Psoas muscle (tissue), 8 donors: ENCODE measurements at regions of chr1 and their contacts with region 1.

Region 1: GRCh38 chr1:41109316-41110197 is 88.0 kb upstream of the SLFNL1 start:
- DNase-seq: peak in 1 of 2 donors; percentile 18
- ATAC-seq: peak; percentile 64 to 93 (median 84)
- H3K4me3 ChIP-seq: no peak overlapping the region
- H3K27ac ChIP-seq: peak overlapping the region; percentile 68
- H3K4me1 ChIP-seq: peaks cover 27% of the 10 kb centered on the region
- H3K27me3 ChIP-seq: no peaks in the 10 kb centered on the region
- CTCF ChIP-seq: no peak

Region 2: GRCh38 chr1:41045740-41046139 is 63.8 kb before region 1 on chr1:
- intact Hi-C with region 1: loop called in 1 of 2 experiments (anchors 10 kb)
- DNase-seq: peak; percentile 42 to 73
- ATAC-seq: peak; percentile 89 to 96 (median 90)
- H3K4me3 ChIP-seq: peak overlapping the region; percentile 46
- H3K27ac ChIP-seq: peak overlapping the region; percentile 83
- H3K4me1 ChIP-seq: peaks cover 26% of the 10 kb centered on the region
- H3K27me3 ChIP-seq: no peaks in the 10 kb centered on the region
- CTCF ChIP-seq: no peak

Region 3: GRCh38 chr1:41239988-41240610 is 130.5 kb after region 1 on chr1:
- intact Hi-C with region 1: loop called in 1 of 2 experiments (anchors 10 kb)
- DNase-seq: no peak
- ATAC-seq: no peak
- H3K4me3 ChIP-seq: peak overlapping the region; percentile 96
- H3K27ac ChIP-seq: peak overlapping the region; percentile 94
- H3K4me1 ChIP-seq: peaks cover 15% of the 10 kb centered on the region
- H3K27me3 ChIP-seq: no peaks in the 10 kb centered on the region
- CTCF ChIP-seq: no peak